ENCODE measurements at regions of chr1 and their contacts with region 1.

Region 1: DNA sequence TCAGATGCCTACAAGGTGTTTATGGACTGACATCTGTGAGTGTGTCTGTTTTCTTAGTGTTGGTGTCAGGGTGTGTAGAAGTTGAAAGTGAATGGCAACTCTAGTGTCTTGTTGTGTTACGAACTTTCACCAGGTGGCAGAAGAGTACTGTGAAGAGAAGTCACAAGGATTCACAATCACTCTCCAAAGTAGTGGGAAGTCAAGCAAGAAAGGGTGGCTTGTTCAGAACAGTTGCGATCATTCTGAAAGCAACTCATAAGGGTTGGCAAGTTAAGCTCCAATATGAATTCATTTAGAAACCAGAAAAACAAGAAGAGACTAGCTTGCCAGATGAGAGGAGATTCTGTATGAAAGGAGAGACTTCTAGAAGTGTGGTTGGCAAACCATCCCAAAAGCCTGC is 86.1 kb downstream of the FASLG start:
- DNase-seq: peak; percentile 82
- H3K4me3 ChIP-seq: no peak overlapping the region
- H3K27ac ChIP-seq: peak overlapping the region; percentile 86
- H3K4me1 ChIP-seq: peaks cover 21% of the 10 kb centered on the region
- H3K27me3 ChIP-seq: no peaks in the 10 kb centered on the region
- CTCF ChIP-seq: peak; percentile 64 to 66
- POLR2A ChIP-seq: no peak

Region 2: GRCh38 chr1:172761581-172762025 is 16.6 kb after region 1 on chr1:
- CTCF ChIA-PET with region 1: interaction called, 4 read pairs
- POLR2A ChIA-PET with region 1: no interaction called
- dilution Hi-C with region 1: no loop called
- intact Hi-C with region 1: loop called (anchors 1 kb)
- DNase-seq: peak; percentile 66
- H3K4me3 ChIP-seq: no peak overlapping the region
- H3K27ac ChIP-seq: peak overlapping the region; percentile 73
- H3K4me1 ChIP-seq: peaks cover 13% of the 10 kb centered on the region
- H3K27me3 ChIP-seq: no peaks in the 10 kb centered on the region
- CTCF ChIP-seq: no peak
- POLR2A ChIP-seq: no peak

Region 3: DNA sequence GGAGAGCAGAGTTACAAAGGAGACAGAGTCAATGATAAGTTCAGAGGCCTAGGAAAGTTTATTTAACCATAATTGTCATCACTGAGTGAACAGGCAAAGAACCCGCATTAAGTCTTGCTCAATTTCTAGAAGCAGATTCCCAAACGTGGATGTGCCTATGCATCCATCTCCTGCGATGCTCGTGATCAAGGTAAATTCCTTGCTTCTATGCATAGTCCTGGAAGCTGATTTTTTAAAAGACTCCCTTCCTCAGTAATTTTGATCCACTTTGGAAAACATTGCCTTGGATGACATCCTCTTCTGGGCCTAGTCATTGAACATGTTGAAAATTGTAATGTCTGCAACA is 189.4 kb after region 1 on chr1:
- CTCF ChIA-PET with region 1: interaction called, 3 read pairs
- POLR2A ChIA-PET with region 1: no interaction called
- dilution Hi-C with region 1: no loop called
- intact Hi-C with region 1: loop called (anchors 1 kb)
- DNase-seq: no peak
- H3K4me3 ChIP-seq: no peak overlapping the region
- H3K27ac ChIP-seq: peak overlapping the region; percentile 90
- H3K4me1 ChIP-seq: peaks cover 53% of the 10 kb centered on the region
- H3K27me3 ChIP-seq: no peaks in the 10 kb centered on the region
- CTCF ChIP-seq: no peak
- POLR2A ChIP-seq: no peak

Region 4: DNA sequence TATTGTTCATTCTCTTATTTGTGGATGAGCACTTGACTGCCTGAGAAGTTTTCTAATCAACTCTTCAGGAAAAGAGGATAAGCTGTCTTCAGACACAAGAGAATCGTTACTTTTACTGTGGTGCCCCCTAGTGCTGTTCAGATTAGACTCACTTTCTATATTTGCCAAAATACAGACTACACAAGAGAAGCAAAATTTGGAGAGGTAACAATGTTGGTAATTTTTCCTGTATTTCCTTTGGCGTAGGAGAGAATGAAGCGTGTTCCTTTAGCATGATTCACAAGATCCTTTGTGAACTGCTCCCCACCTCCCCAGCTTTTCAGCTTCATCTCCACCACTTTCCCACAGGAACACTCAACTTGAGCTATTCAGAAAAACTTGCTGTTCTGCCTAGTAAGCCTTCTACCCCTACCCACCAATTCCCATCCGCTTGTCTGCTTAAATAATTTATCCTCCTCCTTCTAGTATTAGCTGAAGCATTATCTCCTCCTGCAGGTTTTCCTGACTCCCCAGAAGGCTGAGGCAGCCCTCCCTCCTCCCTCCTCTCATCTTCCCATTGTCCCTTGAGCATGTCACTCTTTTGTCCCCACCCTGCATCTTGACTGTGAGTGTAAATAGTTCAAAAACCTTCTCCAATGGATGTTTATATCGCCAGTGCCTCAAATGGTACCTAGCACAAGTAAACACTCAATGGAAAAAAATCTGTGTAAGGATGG is 457.6 kb after region 1 on chr1:
- CTCF ChIA-PET with region 1: interaction called, 164 read pairs
- POLR2A ChIA-PET with region 1: no interaction called
- dilution Hi-C with region 1: no loop called
- intact Hi-C with region 1: loop called (anchors 1 kb)
- DNase-seq: peak; percentile 90
- H3K4me3 ChIP-seq: peak overlapping the region; percentile 9 to 98 (median 91)
- H3K27ac ChIP-seq: peak overlapping the region; percentile 87
- H3K4me1 ChIP-seq: peaks cover 47% of the 10 kb centered on the region
- H3K27me3 ChIP-seq: no peaks in the 10 kb centered on the region
- CTCF ChIP-seq: peak; percentile 39 to 59
- POLR2A ChIP-seq: no peak

Region 5: DNA sequence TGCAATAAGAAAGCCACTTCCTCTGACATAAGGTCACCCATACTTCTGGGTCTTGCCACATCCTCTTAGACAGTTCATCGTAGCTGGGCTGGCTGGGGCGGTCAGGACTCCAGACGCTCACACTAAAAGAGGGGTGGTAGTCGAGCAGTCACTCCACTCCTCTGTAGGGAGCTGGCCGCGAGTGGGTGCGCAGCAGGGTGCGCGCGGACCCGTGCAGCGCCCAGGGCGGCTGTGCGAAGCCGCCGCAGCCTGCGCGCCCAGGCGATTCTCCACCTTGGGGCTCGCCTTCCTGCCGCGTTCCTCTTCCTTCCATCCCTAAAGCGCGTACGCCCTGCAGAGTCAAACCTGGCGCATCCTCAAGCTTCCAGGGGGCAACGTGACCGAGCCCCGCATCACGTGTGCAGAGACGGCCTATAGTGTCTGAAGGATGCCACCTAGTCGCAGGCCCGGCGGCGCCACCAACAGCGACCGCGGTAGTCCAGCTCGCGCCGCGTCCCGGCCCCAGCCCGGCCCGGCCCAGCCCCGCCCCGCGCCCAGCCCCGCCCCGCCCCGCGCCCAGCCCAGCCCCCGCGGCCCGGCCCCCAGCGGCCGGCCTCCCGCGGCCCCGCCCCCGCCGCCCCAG is 731.8 kb after region 1 on chr1:
- CTCF ChIA-PET with region 1: interaction called, 5 read pairs
- POLR2A ChIA-PET with region 1: no interaction called
- dilution Hi-C with region 1: no loop called
- intact Hi-C with region 1: loop called (anchors 5 kb)
- DNase-seq: peak; percentile 81
- H3K4me3 ChIP-seq: peak overlapping the region; percentile 63 to 78 (median 70)
- H3K27ac ChIP-seq: peak overlapping the region; percentile 79
- H3K4me1 ChIP-seq: peaks cover 53% of the 10 kb centered on the region
- H3K27me3 ChIP-seq: no peaks in the 10 kb centered on the region
- CTCF ChIP-seq: peak in 1 of 2 donors; percentile 3
- POLR2A ChIP-seq: peak; percentile 78

Region 6: GRCh38 chr1:174074757-174075156 is 1329.7 kb after region 1 on chr1:
- CTCF ChIA-PET with region 1: interaction called, 5 read pairs
- POLR2A ChIA-PET with region 1: no interaction called
- dilution Hi-C with region 1: no loop called
- intact Hi-C with region 1: loop called (anchors 1 kb)
- DNase-seq: peak; percentile 33
- H3K4me3 ChIP-seq: no peak overlapping the region
- H3K27ac ChIP-seq: no peak overlapping the region
- H3K4me1 ChIP-seq: no peaks in the 10 kb centered on the region
- H3K27me3 ChIP-seq: peaks cover 2 to 3% of the 10 kb centered on the region in 2 experiments
- CTCF ChIP-seq: peak; percentile 2 to 10
- POLR2A ChIP-seq: no peak

Measured in endothelial cell of umbilical vein (primary cell).